Ascending aorta (tissue), 2 donors: ENCODE measurements at regions of chr6 and their contacts with region 1.

Region 1: DNA sequence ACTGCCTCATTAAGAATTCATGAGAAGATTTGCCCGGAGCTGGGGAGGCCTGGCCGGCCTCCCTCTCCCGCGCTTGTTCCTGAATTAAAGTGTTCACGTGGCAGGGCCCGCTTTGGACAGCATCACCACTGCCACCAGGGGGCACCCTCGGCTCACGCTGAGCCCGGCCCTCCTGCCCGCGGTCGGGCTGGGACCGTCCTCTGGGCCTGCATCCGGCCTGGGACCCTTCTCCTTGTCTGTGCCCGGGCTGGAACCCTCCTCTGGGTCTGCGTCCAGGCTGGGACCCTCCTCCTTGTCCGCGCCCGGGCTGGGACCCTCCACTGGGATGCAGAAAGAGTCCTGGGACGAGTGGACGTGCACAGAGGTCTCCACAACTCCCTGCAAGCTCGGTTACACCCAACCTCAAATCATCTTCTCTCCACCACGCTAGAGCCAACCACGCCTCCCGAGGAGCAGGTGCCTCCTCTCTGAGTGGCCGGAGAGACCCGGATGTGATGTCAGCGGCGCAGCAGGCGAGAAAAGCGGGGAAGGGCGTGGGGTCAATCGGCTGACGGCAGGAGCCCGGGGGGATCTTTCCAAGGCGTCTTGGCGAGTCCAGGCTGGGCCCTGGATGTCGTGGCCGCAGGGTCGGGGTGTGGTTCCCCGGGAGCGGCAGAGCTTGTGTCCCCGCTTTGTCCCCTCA is 50.9 kb upstream of the DACT2 start:
- DNase-seq: peak in 1 of 2 donors; percentile 83
- H3K4me3 ChIP-seq: no peak overlapping the region
- H3K27ac ChIP-seq: no peak overlapping the region
- H3K4me1 ChIP-seq: no peaks in the 10 kb centered on the region
- H3K27me3 ChIP-seq: no peaks in the 10 kb centered on the region
- CTCF ChIP-seq: peak; percentile 86 to 94 (median 88)

Region 2: DNA sequence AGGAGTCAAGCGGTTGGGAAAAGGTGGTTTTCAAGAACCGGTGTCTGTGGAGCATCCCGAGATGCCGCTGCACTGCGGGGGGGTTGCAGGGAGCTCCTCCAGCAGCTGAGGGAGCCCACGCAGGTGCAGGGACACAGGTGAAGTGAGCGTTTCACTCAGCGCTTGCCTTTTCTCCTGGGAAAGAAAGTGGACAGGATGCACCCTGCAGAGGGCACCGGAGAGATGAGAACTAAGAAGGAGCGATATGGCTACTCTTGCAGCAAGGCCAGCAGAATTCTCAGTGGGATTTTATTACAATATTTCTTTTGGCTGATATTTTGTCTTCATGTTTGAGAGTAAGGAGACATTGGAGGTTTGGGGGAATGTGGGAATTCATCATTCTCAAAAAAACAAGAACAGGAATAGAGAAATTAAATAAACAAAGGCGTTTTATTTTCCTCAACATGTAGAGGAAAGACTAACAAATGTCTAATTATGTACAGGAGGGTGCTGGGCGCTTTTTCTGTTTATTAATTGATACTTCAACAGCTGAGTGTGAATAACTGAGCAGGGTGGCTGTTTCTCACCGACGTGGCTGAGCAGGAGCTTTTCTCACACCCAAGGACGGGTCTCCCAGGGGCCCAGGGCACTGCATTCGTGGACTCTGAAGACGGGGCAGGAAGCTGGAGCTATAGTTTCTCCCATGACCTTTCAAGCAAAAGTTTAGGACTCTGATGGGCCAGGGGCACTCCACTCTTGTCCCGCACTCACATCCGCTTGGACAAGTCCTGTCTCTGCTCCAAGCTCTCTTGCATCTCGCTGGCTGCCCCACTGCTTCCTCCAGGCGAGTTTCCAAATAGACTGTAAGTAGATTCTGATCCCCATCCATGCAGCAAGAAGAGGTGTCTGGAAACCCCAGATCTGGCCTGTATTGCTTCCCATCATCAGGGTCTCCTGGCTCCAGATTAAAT is 246.6 kb after region 1 on chr6:
- intact Hi-C with region 1: loop called (anchors 5 kb)
- DNase-seq: no peak
- H3K4me3 ChIP-seq: no peak overlapping the region
- H3K27ac ChIP-seq: peak overlapping the region; percentile 7 to 48
- H3K4me1 ChIP-seq: peaks cover 0 to 12% of the 10 kb centered on the region in 2 donors
- H3K27me3 ChIP-seq: no peaks in the 10 kb centered on the region
- CTCF ChIP-seq: peak; percentile 13 to 51 (median 24)

Region 3: DNA sequence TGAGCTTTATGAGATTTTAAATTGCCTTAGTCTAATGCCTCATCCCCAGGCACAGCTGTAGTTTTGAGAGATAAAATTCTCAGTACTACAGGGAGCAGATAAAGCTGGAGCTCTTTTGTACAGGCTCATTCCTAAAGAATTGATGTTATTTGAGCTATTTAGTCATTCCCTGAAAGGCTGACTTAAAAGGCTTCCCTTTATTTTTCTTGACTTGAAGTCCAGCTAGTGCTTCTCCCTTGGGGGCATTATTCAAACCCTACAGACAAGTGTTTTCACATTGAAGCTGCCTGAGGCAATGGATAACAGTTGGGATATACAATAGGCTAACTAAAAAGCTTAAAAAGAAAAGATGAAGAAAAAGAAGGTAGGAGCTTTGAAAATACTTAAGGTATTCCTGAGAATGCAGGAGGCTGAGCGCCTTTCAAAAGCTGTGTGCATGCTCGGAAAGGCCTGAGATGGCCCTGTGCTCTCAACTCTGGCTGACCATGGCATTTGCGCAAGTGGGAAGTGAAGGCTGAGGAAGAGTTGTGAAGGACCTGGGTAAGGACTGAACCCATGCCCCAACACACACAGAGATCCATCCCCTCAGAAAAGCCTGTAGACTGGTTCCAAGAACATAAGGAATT is 385.7 kb after region 1 on chr6:
- intact Hi-C with region 1: loop called (anchors 10 kb)
- DNase-seq: no peak
- H3K4me3 ChIP-seq: no peak overlapping the region
- H3K27ac ChIP-seq: no peak overlapping the region
- H3K4me1 ChIP-seq: peaks cover 7 to 10% of the 10 kb centered on the region in 2 donors
- H3K27me3 ChIP-seq: no peaks in the 10 kb centered on the region
- CTCF ChIP-seq: no peak

Region 4: DNA sequence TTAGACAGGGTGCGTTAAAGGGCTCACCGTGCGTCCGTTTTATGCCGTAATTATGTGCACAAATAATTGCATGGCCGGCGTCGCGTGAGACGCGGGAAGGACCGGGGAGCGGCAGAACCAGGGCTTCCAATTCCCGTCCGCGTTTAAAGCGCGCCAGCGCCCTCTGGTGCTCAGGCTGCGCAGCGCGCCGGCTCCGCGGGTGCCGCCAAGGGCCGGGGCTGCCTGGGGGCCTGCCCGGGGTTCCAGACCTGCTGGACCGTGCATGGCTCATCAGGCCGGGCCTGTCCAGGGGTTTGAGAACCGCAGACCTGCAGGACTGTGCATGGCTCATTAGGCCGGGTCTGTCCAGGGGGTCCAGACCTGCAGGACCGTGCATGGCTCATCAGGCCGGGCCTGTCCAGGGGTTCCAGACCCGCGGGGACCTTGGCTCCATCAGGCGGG is 514.2 kb after region 1 on chr6:
- intact Hi-C with region 1: loop called (anchors 1 kb)
- DNase-seq: peak in 1 of 2 donors; percentile 84
- H3K4me3 ChIP-seq: peak overlapping the region; percentile 42 to 53
- H3K27ac ChIP-seq: no peak overlapping the region
- H3K4me1 ChIP-seq: no peaks in the 10 kb centered on the region
- H3K27me3 ChIP-seq: no peaks in the 10 kb centered on the region
- CTCF ChIP-seq: peak; percentile 93 to 99 (median 94)

Region 5: DNA sequence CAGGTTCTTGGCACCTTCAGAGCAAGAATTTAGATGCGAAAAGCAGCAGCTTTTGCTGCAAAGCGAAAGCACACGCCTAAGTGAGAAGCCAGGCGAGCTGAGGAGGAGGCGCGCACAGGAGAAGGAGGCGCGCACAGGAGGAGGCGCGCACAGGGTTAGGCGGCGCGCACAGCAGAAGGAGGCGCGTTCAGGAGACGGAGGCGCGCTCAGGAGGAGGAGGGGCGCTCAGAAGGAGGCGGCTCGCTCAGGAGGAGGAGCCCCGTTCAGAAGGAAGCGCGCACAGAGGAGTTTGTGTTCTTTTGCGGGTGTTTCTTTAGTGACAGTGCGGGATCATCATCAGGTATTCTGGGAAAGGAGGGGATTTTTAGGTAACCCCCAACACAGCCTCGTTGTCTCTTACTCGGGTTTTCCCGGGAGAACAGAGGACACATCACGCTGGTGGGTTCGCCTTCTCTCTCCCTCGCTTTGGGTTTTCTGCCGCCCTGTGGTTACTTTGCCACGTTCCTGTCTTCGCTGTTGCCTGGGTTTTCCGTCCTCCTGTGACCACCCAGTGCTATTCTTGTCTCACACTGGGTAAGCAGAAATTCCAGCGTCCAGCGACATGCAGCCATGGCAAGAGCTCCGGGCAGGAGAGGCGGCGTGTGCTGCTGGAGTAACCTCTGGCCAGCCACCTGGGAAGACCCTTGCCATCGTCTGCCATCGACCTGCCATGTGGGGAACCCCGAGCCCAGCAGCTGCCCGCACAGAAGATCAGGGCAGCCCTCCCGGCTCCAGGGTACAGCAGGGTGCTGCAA is 1284.3 kb after region 1 on chr6:
- intact Hi-C with region 1: loop called (anchors 10 kb)
- DNase-seq: peak in 1 of 2 donors; percentile 85
- H3K4me3 ChIP-seq: peak overlapping the region; percentile 56 to 62
- H3K27ac ChIP-seq: peak overlapping the region; percentile 58 to 75
- H3K4me1 ChIP-seq: no peaks in the 10 kb centered on the region
- H3K27me3 ChIP-seq: no peaks in the 10 kb centered on the region
- CTCF ChIP-seq: peak in 1 of 3 experiments; percentile 14